Activated CD4-positive, alpha-beta memory T cell treated with anti-CD3 and anti-CD28 coated beads, Interleukin-2, amount 10 ng/mL, durations not matched to agents 7 days and 5 days (primary cell): ENCODE measurements at regions of chr5 and their contacts with region 1.

Region 1: DNA sequence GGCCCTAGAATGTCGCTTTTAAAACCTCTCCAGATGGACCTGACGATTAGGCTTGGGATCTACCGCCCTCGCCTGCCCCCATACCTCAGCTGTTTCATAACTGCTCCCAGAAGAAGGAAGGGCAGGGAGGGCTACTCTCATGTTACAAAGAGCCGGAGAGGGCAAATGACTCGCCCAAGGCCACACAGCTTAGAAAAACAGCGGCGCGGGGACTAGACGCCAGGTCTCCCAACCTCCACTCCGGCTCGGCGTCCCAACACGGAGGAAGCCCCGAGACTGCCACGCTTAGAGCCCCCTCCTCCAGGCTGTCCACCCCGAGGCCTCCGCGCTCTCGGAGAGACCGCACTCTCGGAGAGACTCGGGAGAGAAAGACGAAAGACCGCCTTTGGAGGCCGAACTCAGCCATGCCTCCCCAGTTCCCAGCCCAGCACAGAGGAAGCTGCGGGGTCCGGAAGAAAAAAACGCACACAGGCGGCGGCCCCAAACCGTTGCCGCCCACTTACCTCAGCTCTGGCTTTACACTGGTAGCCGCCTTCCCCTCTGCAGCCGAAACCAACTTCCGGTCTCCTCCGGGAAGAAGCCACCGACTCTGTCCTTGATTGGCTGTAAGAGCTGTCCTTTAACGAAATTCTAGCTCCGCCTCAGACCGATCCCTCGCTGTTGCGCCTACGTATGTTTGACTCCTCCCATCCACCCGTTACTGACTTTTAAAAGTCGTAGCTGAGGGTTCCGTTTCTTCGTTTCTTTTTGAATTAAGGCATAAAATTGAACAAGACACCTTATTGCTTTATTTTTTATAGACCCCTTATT is at the start of gene MED7:
- DNase-seq: peak; percentile 96
- H3K4me3 Mint-ChIP-seq: peak within 1 kb of the TSS; percentile 90
- H3K27ac Mint-ChIP-seq: peak within 1 kb of the TSS; percentile 98
- H3K4me1 Mint-ChIP-seq: peaks cover 43% of the 10 kb centered on the region
- H3K27me3 Mint-ChIP-seq: no peaks in the 10 kb centered on the region
- total RNA-seq, gene MED7: 16.8 to 17.7 TPM

Region 2: DNA sequence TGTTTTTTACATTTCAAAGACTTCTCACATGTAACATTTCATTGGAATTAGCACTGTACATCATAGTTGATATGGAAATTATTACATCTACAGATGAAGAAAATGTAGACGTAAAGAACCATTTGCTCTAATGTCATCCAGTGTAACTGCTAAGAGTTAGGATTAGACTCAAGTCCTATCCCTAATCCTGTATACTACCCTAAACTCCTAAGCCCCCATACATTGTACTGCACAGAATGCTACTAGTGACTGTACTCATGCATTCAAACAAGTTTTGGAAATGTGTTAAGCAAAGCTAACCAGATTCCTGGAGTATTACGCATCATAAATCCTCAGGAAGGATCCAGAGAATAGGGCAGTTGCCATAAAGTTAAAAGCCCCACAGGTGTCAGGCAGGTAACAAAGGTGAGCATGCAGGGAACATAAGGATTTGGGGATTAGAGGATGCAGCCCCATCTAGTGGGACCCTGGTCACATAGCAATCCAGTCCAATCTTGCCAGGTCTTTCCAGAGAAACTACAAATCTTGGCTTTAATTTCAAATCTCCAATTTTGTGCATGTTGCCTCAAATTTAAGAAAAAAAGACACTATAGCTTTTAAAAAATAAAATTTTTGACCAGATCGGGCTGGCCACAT is 115.6 kb before region 1 on chr5:
- CTCF ChIA-PET with region 1: interaction called, 17 read pairs
- POLR2A ChIA-PET with region 1: interaction called, 33 read pairs
- DNase-seq: no peak
- H3K4me3 Mint-ChIP-seq: no peak overlapping the region
- H3K27ac Mint-ChIP-seq: peak overlapping the region; percentile 75
- H3K4me1 Mint-ChIP-seq: peaks cover 87% of the 10 kb centered on the region
- H3K27me3 Mint-ChIP-seq: no peaks in the 10 kb centered on the region

Region 3: GRCh38 chr5:157130925-157131324 is 11.6 kb before region 1 on chr5:
- CTCF ChIA-PET with region 1: interaction called, 25 read pairs
- POLR2A ChIA-PET with region 1: interaction called, 21 read pairs
- DNase-seq: no peak
- H3K4me3 Mint-ChIP-seq: no peak overlapping the region
- H3K27ac Mint-ChIP-seq: no peak overlapping the region
- H3K4me1 Mint-ChIP-seq: peaks cover 26% of the 10 kb centered on the region
- H3K27me3 Mint-ChIP-seq: peaks cover 2% of the 10 kb centered on the region

Region 4: GRCh38 chr5:157180374-157181264 is 38.1 kb after region 1 on chr5 and contains the start of gene ITK:
- CTCF ChIA-PET with region 1: interaction called, 19 read pairs
- POLR2A ChIA-PET with region 1: interaction called, 32 read pairs
- DNase-seq: peak; percentile 67
- H3K4me3 Mint-ChIP-seq: peak within 1 kb of the TSS; percentile 94
- H3K27ac Mint-ChIP-seq: peak within 1 kb of the TSS; percentile 99
- H3K4me1 Mint-ChIP-seq: peaks cover 49% of the 10 kb centered on the region
- H3K27me3 Mint-ChIP-seq: no peaks in the 10 kb centered on the region
- total RNA-seq, gene ITK: 247 to 249 TPM

Region 5: GRCh38 chr5:157219491-157220271 is 77.2 kb after region 1 on chr5:
- CTCF ChIA-PET with region 1: interaction called, 27 read pairs
- POLR2A ChIA-PET with region 1: interaction called, 35 read pairs
- DNase-seq: peak; percentile 36
- H3K4me3 Mint-ChIP-seq: peak overlapping the region; percentile 19
- H3K27ac Mint-ChIP-seq: peak overlapping the region; percentile 90
- H3K4me1 Mint-ChIP-seq: peaks cover 93% of the 10 kb centered on the region
- H3K27me3 Mint-ChIP-seq: no peaks in the 10 kb centered on the region

Region 6: DNA sequence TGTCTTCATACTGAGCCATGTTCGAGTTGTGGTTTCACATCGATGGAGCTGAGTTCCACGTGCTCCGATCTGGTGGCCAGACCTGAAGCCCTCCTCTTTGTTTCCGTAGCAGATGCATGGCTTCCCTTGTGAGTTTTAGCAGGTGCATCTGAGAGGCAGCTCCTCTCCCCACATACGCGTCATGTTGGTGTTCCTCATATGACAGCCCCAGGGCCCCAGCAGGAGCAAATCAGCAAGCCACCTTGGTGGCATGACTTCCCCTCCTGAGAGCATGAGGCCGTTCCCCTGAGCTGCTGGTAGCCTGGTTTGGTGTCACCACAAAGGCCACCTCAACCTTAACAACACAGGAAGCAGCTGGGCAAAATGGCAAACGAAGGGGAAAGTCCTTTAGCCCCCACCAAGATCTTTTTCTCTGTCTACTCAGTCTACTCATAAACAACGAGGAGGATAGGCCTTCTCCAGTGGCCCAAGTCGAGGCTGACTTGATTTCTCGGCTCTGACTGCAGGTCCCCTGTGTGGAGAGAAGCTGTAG is 129.3 kb after region 1 on chr5:
- CTCF ChIA-PET with region 1: interaction called, 8 read pairs
- POLR2A ChIA-PET with region 1: interaction called, 56 read pairs
- DNase-seq: peak; percentile 94
- H3K4me3 Mint-ChIP-seq: peak overlapping the region; percentile 78
- H3K27ac Mint-ChIP-seq: peak overlapping the region; percentile 100
- H3K4me1 Mint-ChIP-seq: peaks cover 86% of the 10 kb centered on the region
- H3K27me3 Mint-ChIP-seq: no peaks in the 10 kb centered on the region